Uterus (tissue), 4 donors: ENCODE measurements at regions of chr20 and their contacts with region 1.

Region 1: DNA sequence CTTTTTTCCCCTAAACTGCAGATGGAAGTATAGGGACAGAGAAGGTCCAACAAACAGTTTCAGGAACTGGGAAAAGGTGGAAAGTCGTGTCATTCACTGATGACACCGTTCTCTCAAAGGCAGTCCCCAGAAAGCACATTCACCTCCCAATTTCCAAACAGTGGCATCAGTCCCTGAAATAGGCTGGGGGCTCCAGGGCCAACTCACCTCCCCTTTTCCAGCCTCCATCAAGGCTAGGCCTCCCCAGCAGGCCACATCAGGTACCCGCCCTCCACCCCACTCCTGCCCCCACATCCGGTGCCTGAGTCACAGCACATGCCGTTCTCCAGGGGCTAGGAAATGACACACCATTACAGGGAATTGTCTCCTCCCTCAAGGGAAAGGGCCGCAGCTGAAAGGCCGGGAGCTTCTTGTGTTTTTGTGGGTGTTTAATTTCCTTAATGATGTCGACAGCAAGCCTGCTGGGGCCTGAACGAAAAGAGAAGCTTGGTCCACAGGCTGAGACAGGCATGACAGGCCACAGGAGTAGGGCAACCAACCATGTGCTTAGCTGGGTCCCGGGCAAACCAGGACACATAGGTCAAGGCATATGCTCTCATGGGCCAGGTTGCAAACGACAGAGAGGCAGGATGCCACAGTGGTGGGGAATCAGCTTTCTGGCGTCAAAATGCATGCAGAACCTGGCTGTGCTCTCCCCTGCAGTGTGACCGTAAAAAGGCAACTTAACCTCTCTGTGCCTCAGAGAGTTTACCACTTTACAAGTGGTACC is 39.2 kb downstream of the ZMYND8 start:
- DNase-seq: peak; percentile 77 to 90
- H3K4me3 ChIP-seq: no peak overlapping the region
- H3K27ac ChIP-seq: peak overlapping the region; percentile 93 to 98
- H3K4me1 ChIP-seq: peaks cover 28 to 36% of the 10 kb centered on the region in 2 donors
- H3K27me3 ChIP-seq: no peaks in the 10 kb centered on the region
- CTCF ChIP-seq: no peak
- POLR2A ChIP-seq: peak; percentile 31 to 41

Region 2: DNA sequence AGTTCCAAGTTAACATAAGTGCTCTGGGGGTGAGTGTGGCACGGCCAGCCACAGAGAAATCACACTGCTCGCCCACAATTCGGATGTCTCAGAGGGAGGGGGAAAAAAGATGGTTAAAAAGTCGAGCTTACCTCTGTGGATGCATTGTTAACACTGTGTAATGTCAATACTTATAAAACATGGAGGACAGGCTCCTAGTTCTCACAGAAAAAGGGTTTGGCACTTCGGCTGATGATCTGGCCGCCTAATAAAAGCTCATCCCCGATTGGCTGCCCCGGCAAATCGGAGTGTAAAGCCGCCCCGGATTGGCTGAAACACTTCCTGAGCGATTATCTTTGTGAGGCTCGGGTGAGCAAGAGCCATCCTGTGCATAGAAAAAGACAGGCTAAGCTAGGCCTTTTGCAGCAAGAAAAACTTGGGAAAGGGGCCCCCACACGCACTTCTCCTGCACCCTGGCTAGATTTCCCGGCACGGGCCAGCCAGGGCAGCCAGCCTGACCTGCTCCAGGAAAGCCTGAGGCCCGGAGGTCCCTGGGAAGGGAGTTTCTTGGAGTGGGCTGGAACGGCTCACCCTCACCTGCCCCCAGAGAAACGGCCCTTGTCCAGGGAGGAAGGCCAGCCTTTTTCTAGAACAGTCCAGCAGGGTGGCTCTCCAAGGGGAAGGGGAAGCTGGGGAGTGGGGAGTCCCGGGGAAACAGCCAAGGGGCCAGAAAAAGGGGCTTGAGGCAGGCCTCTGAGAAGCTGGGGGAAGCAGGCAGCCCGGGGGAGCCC is 39.4 kb after region 1 on chr20 and contains the start of gene ZMYND8:
- intact Hi-C with region 1: loop called (anchors 5 kb)
- DNase-seq: peak; percentile 88 to 97
- H3K4me3 ChIP-seq: no peak within 1 kb of the TSS
- H3K27ac ChIP-seq: peak within 1 kb of the TSS; percentile 94 to 99
- H3K4me1 ChIP-seq: peaks cover 50 to 68% of the 10 kb centered on the region in 2 donors
- H3K27me3 ChIP-seq: no peaks in the 10 kb centered on the region
- CTCF ChIP-seq: no peak
- POLR2A ChIP-seq: peak in 1 of 2 donors; percentile 28
- total RNA-seq, gene ZMYND8: 10.2 to 26.7 (median 16.0) TPM